ENCODE measurements at regions of chr1 and their contacts with region 1.

Region 1: DNA sequence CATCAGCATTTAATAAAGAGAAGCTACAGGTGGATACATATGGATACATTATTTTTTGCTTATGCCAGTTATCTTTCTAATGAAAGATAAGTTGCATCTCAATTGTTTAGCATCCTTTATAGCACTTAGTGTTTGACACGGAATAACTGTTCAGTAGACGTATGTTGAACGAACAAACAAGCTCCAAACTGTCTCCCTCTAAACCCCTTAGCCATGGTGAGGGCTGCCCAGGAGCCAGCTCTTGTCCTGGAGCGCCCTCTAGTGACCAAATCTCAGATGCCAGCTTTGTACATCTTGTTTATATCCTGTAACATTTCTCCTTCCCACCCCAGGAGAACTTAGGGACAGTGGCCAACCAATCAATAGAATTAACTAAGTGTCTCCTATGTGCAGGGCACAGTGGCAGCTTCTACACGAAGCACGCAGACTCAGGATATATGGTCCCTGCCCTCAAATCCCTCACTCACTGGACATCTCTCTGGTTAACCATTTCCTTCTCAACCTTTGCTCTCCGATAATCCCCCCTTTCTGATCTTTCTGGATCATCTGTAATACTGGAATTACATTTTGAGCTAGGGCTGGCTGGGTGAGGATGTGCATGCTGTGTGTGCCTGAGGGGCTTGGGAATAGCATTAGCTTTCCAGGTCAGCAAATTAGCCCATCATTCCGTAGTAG is 22.9 kb downstream of the KCNA10 start:
- DNase-seq: peak; percentile 76
- H3K4me3 ChIP-seq: no peak overlapping the region
- H3K27ac ChIP-seq: no peak overlapping the region
- H3K4me1 ChIP-seq: no peaks in the 10 kb centered on the region
- H3K27me3 ChIP-seq: no peaks in the 10 kb centered on the region
- CTCF ChIP-seq: peak; percentile 67 to 91 (median 88)
- POLR2A ChIP-seq: no peak

Region 2: DNA sequence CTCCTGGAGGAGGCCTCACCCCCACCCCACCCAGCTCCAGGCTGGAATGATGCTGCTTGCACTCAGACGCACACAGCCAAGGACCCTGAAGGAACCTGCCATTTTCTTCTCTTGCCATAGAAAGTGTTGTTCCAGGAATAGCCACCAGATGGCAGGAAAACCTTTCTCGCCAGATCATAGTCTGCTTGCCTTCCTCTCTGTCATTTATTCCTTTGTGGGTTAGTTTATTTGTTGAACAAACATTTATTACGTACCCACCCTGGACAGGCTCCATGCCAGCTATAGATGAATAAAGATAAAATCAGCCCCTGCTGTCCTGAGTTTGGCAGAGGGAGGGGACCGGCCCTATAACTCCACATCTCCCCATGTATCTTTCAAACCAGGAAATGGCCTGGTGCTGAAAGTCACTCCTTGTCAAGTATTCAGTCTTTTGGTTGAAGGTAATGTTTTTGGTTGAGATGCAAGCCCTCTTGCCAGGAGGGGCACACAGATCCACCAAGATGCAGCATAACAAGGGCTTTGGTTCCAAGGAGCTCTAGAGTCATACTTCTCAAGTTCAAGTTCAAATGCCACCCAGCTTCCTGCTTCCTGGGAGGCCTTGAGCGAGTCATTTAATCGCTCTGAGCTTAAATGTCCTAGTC is 292.9 kb before region 1 on chr1:
- intact Hi-C with region 1: loop called (anchors 5 kb)
- DNase-seq: peak; percentile 71
- H3K4me3 ChIP-seq: no peak overlapping the region
- H3K27ac ChIP-seq: no peak overlapping the region
- H3K4me1 ChIP-seq: peaks cover 2% of the 10 kb centered on the region
- H3K27me3 ChIP-seq: no peaks in the 10 kb centered on the region
- CTCF ChIP-seq: peak; percentile 77 to 95 (median 91)
- POLR2A ChIP-seq: no peak

Region 3: GRCh38 chr1:110312188-110313121 is 183.6 kb before region 1 on chr1:
- intact Hi-C with region 1: loop called (anchors 2 kb)
- DNase-seq: peak; percentile 75
- H3K4me3 ChIP-seq: no peak overlapping the region
- H3K27ac ChIP-seq: no peak overlapping the region
- H3K4me1 ChIP-seq: no peaks in the 10 kb centered on the region
- H3K27me3 ChIP-seq: no peaks in the 10 kb centered on the region
- CTCF ChIP-seq: peak; percentile 88 to 98 (median 94)
- POLR2A ChIP-seq: no peak

Region 4: DNA sequence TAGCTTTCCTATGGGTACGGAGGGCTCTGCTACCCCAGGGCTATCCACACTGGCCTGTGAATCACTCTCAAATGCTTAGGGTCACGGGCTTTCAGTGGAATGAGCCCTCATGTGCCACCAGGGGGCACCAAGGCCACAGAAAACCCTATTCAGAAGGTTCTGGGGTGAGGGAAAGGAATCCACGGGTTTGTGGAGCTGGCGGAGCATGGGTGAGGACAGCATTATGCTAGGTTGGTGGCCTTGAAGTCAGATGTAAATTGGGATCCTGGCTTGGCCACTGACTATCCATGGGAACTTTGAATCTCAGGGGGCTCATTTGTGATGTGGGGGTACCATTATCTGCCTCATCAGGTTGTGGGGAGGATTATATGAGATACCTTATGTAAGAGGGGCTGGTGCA is 83.5 kb before region 1 on chr1:
- intact Hi-C with region 1: loop called (anchors 2 kb)
- DNase-seq: peak; percentile 46
- H3K4me3 ChIP-seq: no peak overlapping the region
- H3K27ac ChIP-seq: no peak overlapping the region
- H3K4me1 ChIP-seq: no peaks in the 10 kb centered on the region
- H3K27me3 ChIP-seq: no peaks in the 10 kb centered on the region
- CTCF ChIP-seq: peak; percentile 26 to 81 (median 70)
- POLR2A ChIP-seq: no peak

Region 5: DNA sequence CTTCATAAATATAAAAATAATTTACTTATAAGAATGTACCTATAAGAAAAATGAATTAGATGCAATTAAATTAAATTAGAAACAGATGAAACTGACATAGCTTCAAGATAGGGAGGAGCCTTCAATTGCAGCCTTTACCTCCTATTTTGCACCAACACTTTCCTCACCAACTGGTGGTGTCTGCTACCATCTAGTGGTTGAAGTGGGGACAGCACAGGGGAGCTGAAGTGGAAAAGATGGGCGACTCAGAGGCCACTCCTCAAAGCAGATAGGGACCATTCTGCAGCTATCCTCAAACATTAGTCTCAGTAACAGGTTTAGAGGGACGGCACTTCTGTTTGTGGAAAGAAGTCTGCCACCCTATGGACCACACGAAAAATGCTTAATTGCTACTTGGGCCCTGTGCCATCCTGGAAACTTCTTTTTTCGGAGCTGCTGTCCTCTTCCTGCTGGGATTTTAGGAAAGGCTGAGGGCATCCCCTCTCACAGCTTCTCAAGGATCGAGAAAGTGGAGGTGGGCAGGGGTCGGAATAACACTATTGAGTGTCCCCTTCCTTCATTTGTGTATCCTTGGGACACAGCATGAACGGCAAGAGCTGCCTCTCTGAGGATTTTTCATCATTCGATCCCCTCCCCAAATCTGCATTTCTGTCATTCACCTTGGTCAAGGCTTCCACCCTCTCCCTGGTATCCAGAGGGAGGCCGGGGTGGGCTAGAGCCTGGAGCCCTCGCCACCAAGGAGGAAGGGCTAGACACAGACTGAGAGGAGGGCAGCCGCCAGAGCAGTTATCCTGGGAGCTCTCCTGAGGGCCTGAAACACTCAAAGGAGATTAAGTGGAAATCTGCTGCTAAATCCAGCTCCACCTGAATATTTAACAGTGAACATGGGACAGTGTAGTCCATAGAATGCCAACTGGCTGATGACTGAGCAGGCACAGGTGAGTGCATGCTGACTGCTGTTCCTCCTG is 35.5 kb before region 1 on chr1:
- intact Hi-C with region 1: loop called (anchors 2 kb)
- DNase-seq: peak; percentile 79
- H3K4me3 ChIP-seq: no peak overlapping the region
- H3K27ac ChIP-seq: no peak overlapping the region
- H3K4me1 ChIP-seq: no peaks in the 10 kb centered on the region
- H3K27me3 ChIP-seq: no peaks in the 10 kb centered on the region
- CTCF ChIP-seq: peak; percentile 89 to 97 (median 94)
- POLR2A ChIP-seq: no peak

Region 6: GRCh38 chr1:110538075-110538474 is 42.0 kb after region 1 on chr1:
- intact Hi-C with region 1: no loop called
- DNase-seq: no peak
- H3K4me3 ChIP-seq: no peak overlapping the region
- H3K27ac ChIP-seq: no peak overlapping the region
- H3K4me1 ChIP-seq: no peaks in the 10 kb centered on the region
- H3K27me3 ChIP-seq: no peaks in the 10 kb centered on the region
- CTCF ChIP-seq: no peak
- POLR2A ChIP-seq: no peak

Measured in prostate gland (tissue), 2 donors.